H1 (cell line): ENCODE measurements at regions of chr2 and their contacts with region 1.

Region 1: DNA sequence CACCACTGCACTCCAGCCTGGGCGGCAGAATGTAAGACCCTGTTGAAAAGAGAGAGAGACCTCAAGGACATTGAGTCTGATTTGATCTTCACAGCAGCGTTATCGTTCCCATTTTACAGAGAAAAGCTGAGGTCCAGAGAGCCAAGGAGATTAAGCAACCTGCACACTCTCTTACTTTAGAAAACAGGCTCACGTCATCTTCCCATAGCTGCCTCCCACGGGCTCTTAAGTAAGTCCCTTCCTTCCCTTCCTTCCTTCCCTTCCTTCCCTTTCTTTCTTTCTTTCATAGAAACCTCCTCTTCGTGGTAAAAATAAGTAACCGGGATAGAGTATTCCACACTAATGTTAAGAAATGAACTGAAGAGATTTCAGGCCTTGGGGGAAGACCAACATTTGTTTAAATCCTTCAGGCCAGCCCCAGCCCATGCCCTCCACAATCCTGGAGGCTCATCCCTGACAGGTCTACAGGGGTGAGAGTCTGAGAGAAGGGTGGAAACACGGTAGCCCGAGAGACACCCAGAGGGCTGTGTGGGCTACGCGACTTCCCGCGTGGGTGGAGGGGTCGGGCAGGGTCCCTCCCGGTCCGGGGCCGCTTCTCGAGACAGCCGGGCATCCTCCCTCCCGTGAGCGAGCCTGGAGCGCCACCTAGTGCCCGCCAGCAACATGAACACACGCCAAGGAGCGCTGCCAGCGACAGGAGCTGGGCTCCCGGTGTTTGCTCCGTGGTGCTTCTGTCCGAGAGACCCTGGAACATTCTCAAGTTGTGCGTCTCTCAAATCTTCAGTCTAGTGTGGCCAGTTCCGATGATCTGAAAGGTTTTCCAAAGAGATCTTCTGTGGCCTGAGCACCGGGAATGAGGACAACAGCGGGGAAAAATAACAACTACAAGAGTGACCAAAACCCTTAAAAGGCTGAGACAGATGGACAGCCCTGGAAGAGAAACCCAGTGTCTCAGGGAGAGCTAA is 160.3 kb downstream of the INO80D start:
- DNase-seq: peak; percentile 46 to 96
- H3K4me3 ChIP-seq: peak overlapping the region in 1 of 4 experiments; percentile 47; a peak in 4 of 8 replicates
- H3K27ac ChIP-seq: no peak overlapping the region
- H3K4me1 ChIP-seq: peaks cover 0 to 11% (median 2%) of the 10 kb centered on the region in 4 experiments; a peak in 4 of 7 replicates
- H3K27me3 ChIP-seq: peaks cover 0 to 20% (median 11%) of the 10 kb centered on the region in 4 experiments; a peak in 5 of 7 replicates
- CTCF ChIP-seq: peak; percentile 89 to 94 (median 94)
- EP300 ChIP-seq: no peak
- POLR2A ChIP-seq: no peak
- RAD21 ChIP-seq: peak; percentile 98 to 99

Region 2: DNA sequence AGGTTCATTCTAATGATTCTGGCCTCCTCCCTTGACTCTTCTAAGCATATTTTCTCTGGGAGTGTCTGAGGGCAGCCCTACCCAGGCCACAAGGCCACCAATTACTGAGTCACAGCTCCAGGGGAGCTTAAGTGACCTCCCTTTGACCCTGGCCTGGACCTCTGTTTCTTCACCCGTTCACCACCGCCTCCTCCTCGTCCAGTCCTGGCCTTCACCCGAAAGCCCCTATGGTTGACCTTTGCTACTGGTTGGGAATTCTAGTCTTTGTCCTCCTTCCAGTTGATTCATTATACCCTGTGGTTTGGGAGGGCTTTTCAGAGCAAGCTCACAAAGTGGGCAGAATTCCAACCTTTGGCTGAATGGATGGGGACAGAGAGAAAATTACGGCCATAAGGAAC is 170.7 kb before region 1 on chr2:
- CTCF ChIA-PET with region 1: interaction called, 15 read pairs
- POLR2A ChIA-PET with region 1: no interaction called
- DNase-seq: no peak
- H3K4me3 ChIP-seq: no peak overlapping the region
- H3K27ac ChIP-seq: no peak overlapping the region
- H3K4me1 ChIP-seq: peaks cover 0 to 2% (median 0%) of the 10 kb centered on the region in 4 experiments; a peak in 1 of 7 replicates
- H3K27me3 ChIP-seq: no peaks in the 10 kb centered on the region
- CTCF ChIP-seq: no peak
- EP300 ChIP-seq: no peak
- POLR2A ChIP-seq: no peak
- RAD21 ChIP-seq: no peak

Region 3: DNA sequence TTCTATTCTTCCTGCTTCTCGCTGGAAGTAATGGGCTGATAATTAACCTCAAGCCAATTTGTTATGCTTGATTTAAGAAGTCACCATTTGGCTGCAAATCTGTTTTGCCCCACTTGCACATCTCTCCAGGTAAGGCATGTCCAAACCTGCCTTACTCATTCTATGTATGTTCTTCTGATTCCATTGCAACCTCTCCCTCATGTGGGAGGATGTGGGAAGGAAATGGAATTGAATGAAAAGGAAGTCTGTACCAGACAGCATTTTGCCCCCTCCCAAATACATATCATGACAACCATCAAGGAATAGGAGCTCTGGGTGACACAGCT is 111.7 kb before region 1 on chr2:
- CTCF ChIA-PET with region 1: interaction called, 12 read pairs
- POLR2A ChIA-PET with region 1: no interaction called
- DNase-seq: no peak
- H3K4me3 ChIP-seq: no peak overlapping the region; a peak in 1 of 8 replicates
- H3K27ac ChIP-seq: no peak overlapping the region
- H3K4me1 ChIP-seq: peaks cover 0 to 6% (median 1%) of the 10 kb centered on the region in 4 experiments; a peak in 3 of 7 replicates
- H3K27me3 ChIP-seq: no peaks in the 10 kb centered on the region
- CTCF ChIP-seq: no peak
- EP300 ChIP-seq: no peak
- POLR2A ChIP-seq: no peak
- RAD21 ChIP-seq: no peak

Region 4: DNA sequence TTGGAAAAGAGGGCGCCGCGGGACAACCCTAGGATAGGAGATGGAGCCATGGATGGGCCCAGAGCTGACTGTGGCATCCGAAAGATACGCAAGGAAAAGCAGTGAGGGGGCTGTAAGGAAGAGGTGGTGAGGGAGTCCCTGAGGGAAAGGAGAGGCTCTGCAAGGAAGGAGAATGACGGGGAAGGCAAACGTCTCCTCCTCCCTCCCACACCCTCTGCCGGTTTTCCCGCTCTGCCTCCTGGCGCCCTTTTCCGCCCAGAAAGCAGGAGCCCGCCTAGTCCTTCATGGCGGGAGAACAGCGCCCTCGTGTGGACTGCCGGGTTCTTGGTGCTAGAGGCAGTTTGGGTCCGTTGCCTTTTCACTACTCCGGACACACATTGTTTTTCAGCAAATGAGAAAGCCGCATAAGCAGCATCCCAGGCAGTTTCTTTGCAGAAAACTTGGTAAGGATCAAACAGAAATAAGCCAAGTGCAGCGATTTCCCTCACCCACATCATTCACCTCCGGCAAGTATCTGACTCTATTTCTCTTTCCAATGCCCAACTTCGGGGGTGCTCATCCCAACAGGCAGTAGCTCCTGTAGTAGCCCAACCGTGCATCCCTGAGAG is 40.1 kb before region 1 on chr2:
- CTCF ChIA-PET with region 1: interaction called, 50 read pairs
- POLR2A ChIA-PET with region 1: no interaction called
- DNase-seq: peak; percentile 82 to 98
- H3K4me3 ChIP-seq: no peak overlapping the region
- H3K27ac ChIP-seq: no peak overlapping the region
- H3K4me1 ChIP-seq: peaks cover 0 to 5% (median 0%) of the 10 kb centered on the region in 4 experiments; a peak in 2 of 7 replicates
- H3K27me3 ChIP-seq: no peaks in the 10 kb centered on the region
- CTCF ChIP-seq: peak; percentile 85 to 99 (median 94)
- EP300 ChIP-seq: no peak
- POLR2A ChIP-seq: no peak
- RAD21 ChIP-seq: peak; percentile 98 to 99

Region 5: GRCh38 chr2:205903638-205904037 is 22.0 kb before region 1 on chr2:
- CTCF ChIA-PET with region 1: interaction called, 83 read pairs
- POLR2A ChIA-PET with region 1: no interaction called
- DNase-seq: no peak
- H3K4me3 ChIP-seq: no peak overlapping the region
- H3K27ac ChIP-seq: no peak overlapping the region
- H3K4me1 ChIP-seq: no peaks in the 10 kb centered on the region
- H3K27me3 ChIP-seq: no peaks in the 10 kb centered on the region
- CTCF ChIP-seq: peak; percentile 69 to 83 (median 70)
- EP300 ChIP-seq: no peak
- POLR2A ChIP-seq: no peak
- RAD21 ChIP-seq: peak; percentile 58 to 66

Region 6: DNA sequence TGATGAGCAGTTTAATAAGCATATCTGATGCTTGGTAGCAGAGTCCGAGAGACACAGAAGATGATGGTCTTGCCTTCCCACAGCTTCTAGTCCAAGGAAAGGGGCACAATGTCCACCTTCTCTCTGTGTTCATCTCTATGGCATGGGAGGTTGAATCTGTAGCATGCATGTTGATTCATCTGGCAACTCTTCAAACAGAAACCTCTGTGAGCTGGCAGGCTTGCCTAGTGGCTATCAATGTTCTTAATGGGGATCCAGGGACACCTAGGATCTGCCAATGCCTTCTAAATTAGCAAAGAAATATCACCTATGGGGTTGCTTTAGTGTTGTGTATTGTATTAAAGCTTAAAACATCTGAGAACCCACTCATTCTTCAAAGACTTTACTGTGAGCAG is 10.5 kb before region 1 on chr2:
- CTCF ChIA-PET with region 1: interaction called, 36 read pairs
- POLR2A ChIA-PET with region 1: no interaction called
- DNase-seq: no peak
- H3K4me3 ChIP-seq: no peak overlapping the region
- H3K27ac ChIP-seq: no peak overlapping the region
- H3K4me1 ChIP-seq: no peaks in the 10 kb centered on the region
- H3K27me3 ChIP-seq: no peaks in the 10 kb centered on the region
- CTCF ChIP-seq: no peak
- EP300 ChIP-seq: no peak
- POLR2A ChIP-seq: no peak
- RAD21 ChIP-seq: no peak

Region 7: DNA sequence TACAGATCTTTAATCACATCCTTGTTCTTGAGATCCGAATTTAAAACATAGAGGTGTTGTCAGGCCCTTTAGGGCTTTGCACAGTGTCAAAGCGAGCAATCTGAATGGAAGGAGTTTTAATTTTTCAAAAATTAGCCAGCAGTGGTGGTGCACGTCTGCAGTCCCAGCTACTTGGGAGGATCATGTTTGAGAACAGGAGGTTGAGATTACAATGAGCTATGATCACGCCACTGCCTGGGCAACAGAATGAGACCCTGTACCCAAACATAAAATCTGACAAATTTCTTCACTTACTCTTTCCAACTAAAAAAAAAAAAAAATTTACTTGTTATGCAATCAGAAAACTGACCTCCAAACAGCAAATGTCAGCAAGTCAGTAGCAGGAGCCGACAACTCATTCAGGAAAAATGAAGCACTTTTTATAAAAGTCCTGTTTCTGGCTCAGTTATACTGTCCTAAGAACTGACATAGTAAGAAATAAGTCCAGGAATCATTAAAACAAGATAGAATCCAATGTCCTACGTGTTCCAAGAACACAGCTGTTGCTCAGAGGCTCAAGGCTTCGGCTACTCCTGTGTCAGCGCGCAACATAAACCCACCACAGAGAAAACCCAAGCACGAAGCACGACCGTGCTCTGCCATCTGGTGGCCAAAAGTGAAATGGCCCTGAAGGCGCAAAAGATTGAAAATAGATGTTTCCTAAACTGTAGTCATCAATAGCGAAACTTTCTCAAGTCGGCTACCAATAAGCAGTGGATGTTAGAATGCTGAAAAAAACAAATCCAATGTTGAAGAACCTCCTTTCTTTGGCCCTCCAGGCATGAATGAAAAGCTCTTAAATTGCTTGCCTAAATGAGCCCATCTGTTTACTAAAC is 22.2 kb after region 1 on chr2:
- CTCF ChIA-PET with region 1: interaction called, 38 read pairs
- POLR2A ChIA-PET with region 1: no interaction called
- DNase-seq: peak; percentile 21 to 88
- H3K4me3 ChIP-seq: no peak overlapping the region
- H3K27ac ChIP-seq: no peak overlapping the region
- H3K4me1 ChIP-seq: peaks cover 0 to 3% (median 0%) of the 10 kb centered on the region in 4 experiments; a peak in 1 of 7 replicates
- H3K27me3 ChIP-seq: no peaks in the 10 kb centered on the region
- CTCF ChIP-seq: peak; percentile 83 to 93 (median 90)
- EP300 ChIP-seq: no peak
- POLR2A ChIP-seq: no peak
- RAD21 ChIP-seq: peak; percentile 90 to 94